ENCODE measurements at regions of chr13 and their contacts with region 1.

Region 1: DNA sequence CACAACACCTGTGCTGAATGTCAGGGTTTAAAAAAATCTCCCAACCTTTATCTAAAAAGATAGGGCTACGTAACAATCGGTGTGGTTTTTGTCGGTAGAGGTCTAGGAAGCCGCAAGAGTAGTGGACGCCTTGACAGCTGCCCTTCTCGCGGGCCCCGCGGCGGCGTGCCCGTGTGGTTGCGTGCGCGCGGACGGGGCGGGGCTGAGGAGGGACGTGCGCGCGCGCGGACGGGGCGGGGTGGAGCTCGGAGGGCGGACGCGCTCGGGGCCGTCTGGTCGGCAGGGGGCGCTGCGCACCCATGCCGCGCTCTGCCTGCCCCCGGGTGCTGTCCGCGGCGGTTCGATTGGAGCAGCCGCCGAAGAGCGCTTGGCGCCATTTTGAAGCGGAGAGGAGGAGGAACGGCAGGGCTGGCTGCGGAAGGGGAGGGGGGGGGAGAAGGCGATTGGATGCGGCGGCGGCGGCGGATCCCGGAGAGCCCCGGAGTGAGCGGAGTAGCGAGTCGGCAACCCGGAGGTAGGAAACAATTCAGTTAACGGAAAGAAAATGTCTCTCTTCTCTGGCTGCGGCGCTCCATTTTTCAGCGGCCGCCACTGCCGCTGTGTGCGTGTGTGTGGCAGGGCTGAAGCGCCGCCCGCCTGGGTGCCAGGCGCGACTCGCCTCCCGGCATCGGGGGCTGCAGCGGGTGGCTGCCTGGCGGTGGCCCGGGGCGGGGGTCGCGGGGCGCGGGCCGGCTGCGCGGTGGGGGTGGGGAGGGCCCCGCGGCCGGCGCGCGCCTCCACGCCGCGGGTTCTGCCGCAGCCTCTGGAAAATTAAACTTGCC is at the start of gene PDS5B:
- DNase-seq: peak; percentile 90 to 98 (median 94)
- ATAC-seq: peak; percentile 89 to 92 (median 90)
- H3K4me3 ChIP-seq: peak within 1 kb of the TSS; percentile 87 to 97
- H3K4me3 Mint-ChIP-seq: peak within 1 kb of the TSS; percentile 97 to 98 (median 97)
- H3K27ac ChIP-seq: peak within 1 kb of the TSS; percentile 81
- H3K27ac Mint-ChIP-seq: peak within 1 kb of the TSS; percentile 93 to 96
- H3K4me1 ChIP-seq: peaks cover 8 to 19% of the 10 kb centered on the region in 2 experiments
- H3K4me1 Mint-ChIP-seq: peaks cover 41 to 45% (median 44%) of the 10 kb centered on the region in 3 donors
- H3K27me3 ChIP-seq: no peaks in the 10 kb centered on the region
- H3K27me3 Mint-ChIP-seq: no peaks in the 10 kb centered on the region
- total RNA-seq, gene PDS5B: 45.4 to 48.5 (median 46.9) TPM

Region 2: GRCh38 chr13:32530841-32531253 is 55.4 kb before region 1 on chr13:
- CTCF ChIA-PET with region 1: interaction called in 1 of 2 experiments, 10 read pairs
- POLR2A ChIA-PET with region 1: interaction called in 1 of 2 experiments, 5 read pairs
- DNase-seq: peak in 1 of 35 experiments; percentile 52
- ATAC-seq: peak; percentile 27 to 69 (median 56)
- H3K4me3 ChIP-seq: peak overlapping the region in 1 of 2 donors; percentile 27
- H3K4me3 Mint-ChIP-seq: peak overlapping the region; percentile 61 to 72 (median 65)
- H3K27ac ChIP-seq: peak overlapping the region; percentile 78
- H3K27ac Mint-ChIP-seq: peak overlapping the region; percentile 23 to 87
- H3K4me1 ChIP-seq: peaks cover 29 to 37% of the 10 kb centered on the region in 2 experiments
- H3K4me1 Mint-ChIP-seq: peaks cover 76 to 89% (median 87%) of the 10 kb centered on the region in 3 donors
- H3K27me3 ChIP-seq: no peaks in the 10 kb centered on the region
- H3K27me3 Mint-ChIP-seq: no peaks in the 10 kb centered on the region

Region 3: GRCh38 chr13:32538621-32539246 is 47.6 kb before region 1 on chr13 and contains the start of gene N4BP2L2:
- CTCF ChIA-PET with region 1: interaction called, 5 to 18 read pairs
- POLR2A ChIA-PET with region 1: interaction called, 3 to 4 read pairs
- DNase-seq: peak; percentile 75 to 96 (median 91)
- ATAC-seq: peak; percentile 96 to 98 (median 98)
- H3K4me3 ChIP-seq: peak within 1 kb of the TSS; percentile 65 to 100
- H3K4me3 Mint-ChIP-seq: peak within 1 kb of the TSS; percentile 99
- H3K27ac ChIP-seq: peak within 1 kb of the TSS; percentile 97
- H3K27ac Mint-ChIP-seq: peak within 1 kb of the TSS; percentile 99 to 100
- H3K4me1 ChIP-seq: peaks cover 7 to 30% of the 10 kb centered on the region in 2 experiments
- H3K4me1 Mint-ChIP-seq: peaks cover 45 to 47% (median 46%) of the 10 kb centered on the region in 3 donors
- H3K27me3 ChIP-seq: no peaks in the 10 kb centered on the region
- H3K27me3 Mint-ChIP-seq: peaks cover 2 to 6% of the 10 kb centered on the region in 2 donors
- total RNA-seq, gene N4BP2L2: 200 to 241 (median 216) TPM

Region 4: DNA sequence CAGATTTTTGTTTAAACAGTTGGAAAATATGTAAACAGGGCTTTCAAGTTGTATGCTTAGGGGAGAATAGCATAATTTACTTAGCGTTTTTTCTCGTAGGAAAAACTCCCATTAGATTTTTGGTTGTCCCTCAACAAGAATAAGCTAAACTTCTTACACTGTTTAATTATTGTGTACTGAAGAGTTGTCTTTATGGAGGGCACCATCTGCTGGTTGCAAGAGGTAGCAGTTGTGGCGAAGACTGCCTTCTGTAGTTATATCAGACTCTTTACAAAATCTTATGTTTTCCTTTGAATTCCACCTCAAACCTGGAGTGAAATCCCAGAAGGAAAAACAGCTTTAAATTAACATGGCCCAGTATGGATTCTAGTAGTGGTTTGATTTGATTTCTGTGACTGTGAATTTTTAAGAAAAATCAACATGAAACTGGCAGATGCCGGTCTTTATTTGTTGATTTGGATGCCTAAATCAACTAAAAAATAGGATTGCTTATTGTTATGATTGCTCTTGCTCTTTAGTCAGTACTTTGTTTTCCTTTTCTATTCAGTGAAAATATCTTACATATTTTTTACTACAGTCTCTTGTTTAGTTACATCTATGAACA is 53.3 kb after region 1 on chr13:
- CTCF ChIA-PET with region 1: interaction called, 9 to 30 read pairs
- POLR2A ChIA-PET with region 1: interaction called in 1 of 2 experiments, 5 read pairs
- DNase-seq: peak in 33 of 35 experiments; percentile 12 to 79 (median 46)
- ATAC-seq: peak; percentile 84 to 96 (median 94)
- H3K4me3 ChIP-seq: no peak overlapping the region
- H3K4me3 Mint-ChIP-seq: no peak overlapping the region
- H3K27ac ChIP-seq: no peak overlapping the region
- H3K27ac Mint-ChIP-seq: no peak overlapping the region
- H3K4me1 ChIP-seq: peaks cover 0 to 9% of the 10 kb centered on the region in 2 experiments
- H3K4me1 Mint-ChIP-seq: peaks cover 33 to 38% (median 36%) of the 10 kb centered on the region in 3 donors
- H3K27me3 ChIP-seq: no peaks in the 10 kb centered on the region
- H3K27me3 Mint-ChIP-seq: no peaks in the 10 kb centered on the region

Region 5: DNA sequence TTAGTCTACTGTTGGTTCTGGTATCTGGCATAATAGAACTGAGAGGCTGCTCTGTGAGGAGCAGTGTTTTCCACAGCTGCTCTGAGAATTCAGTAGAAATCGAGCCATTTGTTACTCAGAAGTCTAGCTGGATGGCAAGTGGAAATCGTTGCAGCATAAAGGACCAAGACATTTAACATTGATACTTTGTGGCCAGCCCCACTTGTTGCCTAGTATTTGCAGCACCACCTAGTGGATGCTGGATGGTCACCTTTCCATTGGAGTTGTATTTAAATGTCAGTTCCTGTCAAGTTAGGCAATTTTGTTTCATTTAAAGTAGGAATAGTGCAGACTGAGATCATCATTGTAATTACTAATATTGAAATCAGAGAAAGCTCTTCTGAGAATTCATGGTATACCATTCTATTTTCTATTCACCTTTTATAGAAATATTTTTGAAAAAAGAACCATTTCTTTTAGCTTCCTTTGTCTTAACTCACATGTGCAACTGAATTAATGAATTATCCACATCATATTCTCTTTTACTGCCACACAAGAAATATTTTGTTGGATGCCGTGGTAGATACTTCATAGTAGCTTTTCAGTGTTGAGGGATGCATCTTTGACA is 64.5 kb after region 1 on chr13:
- CTCF ChIA-PET with region 1: interaction called, 9 to 27 read pairs
- POLR2A ChIA-PET with region 1: interaction called, 4 read pairs
- DNase-seq: peak in 32 of 35 experiments; percentile 7 to 77 (median 39)
- ATAC-seq: peak; percentile 78 to 86 (median 84)
- H3K4me3 ChIP-seq: no peak overlapping the region
- H3K4me3 Mint-ChIP-seq: no peak overlapping the region
- H3K27ac ChIP-seq: no peak overlapping the region
- H3K27ac Mint-ChIP-seq: no peak overlapping the region
- H3K4me1 ChIP-seq: peaks cover 2 to 5% of the 10 kb centered on the region in 2 experiments
- H3K4me1 Mint-ChIP-seq: peaks cover 43 to 64% (median 44%) of the 10 kb centered on the region in 3 donors
- H3K27me3 ChIP-seq: no peaks in the 10 kb centered on the region
- H3K27me3 Mint-ChIP-seq: no peaks in the 10 kb centered on the region

Region 6: DNA sequence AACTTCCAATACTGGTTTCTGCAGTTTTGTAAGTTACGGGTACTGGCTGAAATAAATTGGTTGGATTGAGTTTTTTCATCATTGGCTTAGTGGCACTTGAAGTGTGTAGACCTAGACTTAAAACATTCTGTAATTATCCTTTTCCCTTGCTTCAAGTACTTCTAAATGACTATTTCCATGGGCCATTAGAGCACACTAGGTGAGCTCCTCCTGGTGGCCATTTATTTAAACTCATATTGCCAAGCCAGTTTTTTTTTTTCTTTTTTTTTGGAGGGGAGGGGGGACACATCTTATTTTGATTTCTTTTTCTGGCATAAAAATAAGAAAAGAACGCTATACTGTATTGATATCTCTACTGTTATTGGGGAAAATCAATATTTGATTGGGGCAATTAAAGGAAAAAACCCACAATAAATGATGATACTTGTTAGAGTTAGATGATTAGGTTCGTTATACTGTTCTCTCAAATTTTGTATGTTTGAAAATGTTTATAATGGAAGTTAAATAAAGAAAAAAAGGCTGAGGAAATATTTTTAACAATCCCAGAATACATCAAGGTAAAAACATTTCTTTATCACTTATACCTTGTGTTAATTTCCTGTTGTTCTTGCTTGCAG is 82.8 kb after region 1 on chr13:
- CTCF ChIA-PET with region 1: interaction called in 1 of 2 experiments, 32 read pairs
- POLR2A ChIA-PET with region 1: interaction called in 1 of 2 experiments, 4 read pairs
- DNase-seq: peak in 7 of 35 experiments; percentile 6 to 67 (median 9)
- ATAC-seq: peak in 1 of 4 experiments; percentile 50
- H3K4me3 ChIP-seq: no peak overlapping the region
- H3K4me3 Mint-ChIP-seq: no peak overlapping the region
- H3K27ac ChIP-seq: no peak overlapping the region
- H3K27ac Mint-ChIP-seq: no peak overlapping the region
- H3K4me1 ChIP-seq: no peaks in the 10 kb centered on the region
- H3K4me1 Mint-ChIP-seq: peaks cover 12 to 19% (median 12%) of the 10 kb centered on the region in 3 donors
- H3K27me3 ChIP-seq: no peaks in the 10 kb centered on the region
- H3K27me3 Mint-ChIP-seq: no peaks in the 10 kb centered on the region

Region 7: DNA sequence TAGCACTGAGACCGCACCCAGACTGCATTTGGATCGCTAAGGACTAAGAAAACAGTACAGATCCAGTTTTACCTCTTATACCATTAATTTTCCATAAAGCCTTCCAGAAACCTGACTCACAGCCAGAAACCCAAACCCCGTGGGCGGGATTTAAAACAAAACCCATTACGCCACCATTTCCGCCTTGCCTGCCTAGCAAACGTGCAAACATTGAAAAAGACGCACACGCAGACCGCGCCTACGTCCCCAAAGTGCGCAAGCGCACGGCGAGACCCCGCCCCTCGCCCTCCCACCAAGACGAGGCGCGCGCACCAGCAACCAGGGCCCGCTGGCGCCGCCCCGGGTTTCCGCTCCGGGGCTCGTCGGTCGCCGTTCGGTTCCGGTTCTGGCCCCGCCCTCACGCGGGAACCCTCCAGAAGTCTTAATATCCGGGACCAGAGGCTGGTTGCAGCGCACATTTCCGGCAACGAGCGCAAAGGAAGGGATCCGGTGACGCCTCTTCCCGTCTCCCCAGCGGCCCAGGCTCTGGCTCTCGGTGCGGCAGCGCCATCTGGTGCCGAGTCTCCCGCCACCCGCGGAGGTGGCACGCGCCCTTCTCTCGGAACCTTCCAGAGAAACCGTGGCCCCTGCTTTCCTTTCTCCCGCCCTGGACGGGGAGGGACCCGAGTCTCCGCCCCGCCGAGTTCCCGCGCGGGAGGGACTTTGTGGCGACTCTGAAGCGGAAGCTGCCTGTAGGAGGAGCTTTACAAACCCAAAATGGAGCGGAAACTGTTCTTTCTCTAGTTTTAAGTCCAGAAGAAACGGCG is 956.2 kb after region 1 on chr13:
- CTCF ChIA-PET with region 1: interaction called, 3 to 13 read pairs
- POLR2A ChIA-PET with region 1: interaction called, 3 to 6 read pairs
- DNase-seq: peak; percentile 96 to 99 (median 98)
- ATAC-seq: peak; percentile 85 to 87 (median 86)
- H3K4me3 ChIP-seq: peak overlapping the region; percentile 74 to 88
- H3K4me3 Mint-ChIP-seq: peak overlapping the region; percentile 84 to 96 (median 93)
- H3K27ac ChIP-seq: peak overlapping the region; percentile 99
- H3K27ac Mint-ChIP-seq: peak overlapping the region; percentile 100
- H3K4me1 ChIP-seq: peaks cover 19 to 29% of the 10 kb centered on the region in 2 experiments
- H3K4me1 Mint-ChIP-seq: peaks cover 37 to 58% (median 44%) of the 10 kb centered on the region in 3 donors
- H3K27me3 ChIP-seq: no peaks in the 10 kb centered on the region
- H3K27me3 Mint-ChIP-seq: no peaks in the 10 kb centered on the region

Measured in T-cell (primary cell).